BJ (cell line): ENCODE measurements at regions of chr7 and their contacts with region 1.

Region 1: GRCh38 chr7:135475521-135475920 is 34.4 kb downstream of the CNOT4 start:
- DNase-seq: no peak
- H3K4me3 ChIP-seq: no peak overlapping the region
- H3K27me3 ChIP-seq: no peaks in the 10 kb centered on the region
- CTCF ChIP-seq: no peak

Region 2: DNA sequence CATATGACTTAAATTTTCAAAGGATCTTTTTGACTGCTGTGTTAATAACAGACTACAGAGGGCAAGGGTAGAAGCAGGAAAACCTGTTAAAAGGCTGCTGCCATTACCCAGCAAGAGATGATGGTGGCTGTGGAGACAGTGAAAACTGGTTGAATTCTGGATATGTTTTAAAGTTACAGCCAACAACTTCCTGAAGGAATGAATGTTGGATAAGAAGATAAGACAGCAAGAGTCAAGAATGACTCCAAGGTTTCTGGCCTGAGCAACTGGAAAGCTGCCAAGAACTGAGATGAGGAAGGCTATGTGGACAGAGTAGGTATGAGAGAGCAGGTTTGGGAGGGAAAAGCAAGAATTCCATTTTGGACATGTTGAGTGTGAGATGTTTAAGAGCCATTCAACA is 15.3 kb after region 1 on chr7:
- CTCF ChIA-PET with region 1: no interaction called
- POLR2A ChIA-PET with region 1: interaction called, 21 read pairs
- DNase-seq: no peak
- H3K4me3 ChIP-seq: no peak overlapping the region
- H3K27me3 ChIP-seq: no peaks in the 10 kb centered on the region
- CTCF ChIP-seq: no peak

Region 3: DNA sequence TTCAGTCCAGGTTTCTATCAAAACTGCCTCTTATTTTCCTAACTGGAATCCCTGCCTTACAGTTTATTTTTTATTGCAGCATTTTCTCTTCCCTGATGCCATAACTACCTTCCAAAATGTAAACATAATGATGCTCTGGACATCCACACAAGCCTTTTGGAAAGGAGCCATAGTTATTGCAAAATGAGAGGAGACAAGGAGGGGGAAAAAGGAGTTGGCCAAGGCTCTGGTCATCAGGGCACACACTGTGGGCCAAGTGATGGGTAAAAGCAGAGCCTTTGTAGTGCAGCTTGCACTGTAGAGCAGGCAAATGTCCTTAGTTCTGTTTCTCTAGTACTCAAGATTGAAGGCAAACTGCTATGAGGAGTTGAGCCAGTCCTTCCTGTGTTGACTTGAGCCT is 790.9 kb after region 1 on chr7:
- CTCF ChIA-PET with region 1: no interaction called
- POLR2A ChIA-PET with region 1: no interaction called
- DNase-seq: no peak
- H3K4me3 ChIP-seq: no peak overlapping the region
- H3K27me3 ChIP-seq: no peaks in the 10 kb centered on the region
- CTCF ChIP-seq: no peak